ENCODE measurements at regions of chr20 and their contacts with region 1.

Region 1: DNA sequence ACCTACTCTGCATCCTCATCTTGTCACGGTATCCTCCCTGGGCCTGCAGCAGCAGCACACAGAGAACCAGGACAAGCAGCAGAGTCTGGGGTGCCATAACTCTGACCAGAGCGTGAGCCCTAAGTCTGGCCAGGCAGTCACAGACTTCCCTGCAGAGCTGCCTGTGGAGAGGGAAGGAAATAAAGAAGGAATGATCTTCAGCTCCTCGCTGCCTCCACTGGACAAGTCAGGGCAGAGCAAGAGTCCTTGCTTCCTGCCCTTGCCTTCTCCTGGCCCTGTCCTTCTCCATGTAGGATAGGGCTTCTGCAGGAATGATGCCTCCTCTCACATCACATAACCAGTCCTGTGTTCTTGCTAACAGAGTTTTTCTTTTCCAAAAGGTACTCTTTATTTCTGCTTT is 15.9 kb upstream of the WFDC11 start:
- DNase-seq: no peak
- H3K4me3 ChIP-seq: no peak overlapping the region
- H3K27ac ChIP-seq: no peak overlapping the region
- H3K4me1 ChIP-seq: no peaks in the 10 kb centered on the region
- H3K27me3 ChIP-seq: no peaks in the 10 kb centered on the region
- CTCF ChIP-seq: no peak
- POLR2A ChIP-seq: no peak

Region 2: DNA sequence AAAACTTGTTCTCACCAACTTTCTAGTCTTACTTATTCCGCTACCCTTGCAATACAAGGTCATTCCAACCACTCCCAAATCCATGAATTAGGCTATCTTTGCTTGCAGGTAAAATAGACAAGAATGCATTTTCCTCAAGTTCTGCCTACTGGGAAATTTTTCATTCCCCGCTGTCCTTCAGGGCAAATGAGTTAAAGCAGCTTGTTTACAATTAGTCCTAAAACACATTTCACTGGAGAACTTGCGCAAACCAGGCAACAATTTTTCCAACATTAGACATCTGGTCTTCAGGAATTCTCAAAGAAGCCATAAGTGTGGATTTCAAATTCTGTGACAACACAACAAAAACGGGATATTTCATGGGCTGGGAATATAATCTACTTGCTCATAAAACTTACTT is 56.7 kb after region 1 on chr20:
- intact Hi-C with region 1: no loop called
- DNase-seq: no peak
- H3K4me3 ChIP-seq: no peak overlapping the region
- H3K27ac ChIP-seq: no peak overlapping the region
- H3K4me1 ChIP-seq: no peaks in the 10 kb centered on the region
- H3K27me3 ChIP-seq: no peaks in the 10 kb centered on the region
- CTCF ChIP-seq: no peak
- POLR2A ChIP-seq: no peak

Region 3: DNA sequence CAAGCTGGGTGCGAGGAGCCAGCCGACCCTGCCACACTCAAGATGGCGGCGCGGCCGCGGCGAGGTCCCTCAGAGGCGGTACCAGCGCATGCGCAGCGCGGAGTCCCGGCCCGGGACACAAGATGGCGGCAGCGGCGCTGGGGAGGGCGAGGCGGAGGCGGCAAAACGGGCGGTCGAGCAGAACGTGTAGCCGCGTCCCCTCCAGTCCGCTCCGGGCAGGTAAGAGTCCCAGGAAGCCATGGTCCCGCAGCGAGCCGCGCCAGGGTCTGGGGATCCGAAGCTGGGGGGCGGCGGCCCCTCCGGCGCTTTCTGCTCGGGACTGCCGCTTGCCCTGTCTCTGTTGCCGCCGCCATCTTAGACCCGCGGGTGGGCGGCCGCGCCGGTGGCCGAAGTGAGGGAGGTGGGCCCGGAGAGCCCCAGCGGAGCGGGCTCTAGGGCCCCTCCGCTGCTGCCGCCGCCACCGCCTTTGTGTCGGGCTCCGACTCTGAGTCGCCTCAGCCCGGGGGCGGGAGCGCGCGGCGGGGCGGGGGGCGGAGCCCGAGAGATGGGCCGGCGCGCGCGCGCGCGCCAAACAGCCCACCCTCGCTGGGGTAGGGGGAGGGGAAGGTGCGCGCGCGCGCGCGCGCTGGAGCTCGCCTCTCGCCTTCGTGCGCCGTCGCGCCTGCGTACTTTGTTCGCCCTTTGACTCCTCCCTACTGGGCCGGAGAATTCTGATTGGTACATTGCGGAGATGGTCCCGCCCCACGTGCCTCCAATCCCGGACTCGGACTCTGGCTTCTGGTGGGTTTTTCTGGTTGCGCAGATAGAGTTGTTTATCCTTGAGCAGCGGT is 248.9 kb after region 1 on chr20 and contains the start of gene PCIF1:
- intact Hi-C with region 1: loop called (anchors 5 kb)
- DNase-seq: peak; percentile 97
- H3K4me3 ChIP-seq: peak within 1 kb of the TSS; percentile 81 to 100 (median 98)
- H3K27ac ChIP-seq: peak within 1 kb of the TSS; percentile 100
- H3K4me1 ChIP-seq: no peaks in the 10 kb centered on the region
- H3K27me3 ChIP-seq: no peaks in the 10 kb centered on the region
- CTCF ChIP-seq: peak in 2 of 3 donors; percentile 25 to 30
- POLR2A ChIP-seq: peak; percentile 96
- total RNA-seq, gene PCIF1: 28.2 to 40.2 (median 30.8) TPM